ENCODE measurements at regions of chr3 and their contacts with region 1.

Region 1: DNA sequence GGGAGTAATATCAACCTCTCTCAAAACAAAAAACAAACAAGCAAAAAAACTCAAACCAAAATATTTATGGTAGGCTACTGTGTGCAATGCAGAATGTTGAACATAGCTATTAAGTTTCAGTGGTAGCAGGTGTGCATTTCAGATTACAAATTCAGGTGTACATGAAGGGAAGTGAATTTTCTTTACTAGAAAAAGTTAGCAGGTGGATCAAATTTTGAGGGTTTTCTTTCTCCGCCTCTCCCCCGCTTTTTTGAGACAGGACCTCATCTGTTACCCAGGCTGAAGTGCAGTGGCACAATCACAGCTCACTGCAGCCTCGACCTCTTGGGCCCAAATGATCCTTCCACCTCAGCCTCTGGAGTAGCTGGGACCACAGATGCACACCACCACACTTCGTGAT is 109.7 kb upstream of the GOLIM4 start:
- DNase-seq: peak; percentile 50
- H3K4me3 ChIP-seq: peak overlapping the region; percentile 68
- H3K27ac ChIP-seq: peak overlapping the region; percentile 98
- H3K4me1 ChIP-seq: peaks cover 43% of the 10 kb centered on the region
- CTCF ChIP-seq: no peak

Region 2: DNA sequence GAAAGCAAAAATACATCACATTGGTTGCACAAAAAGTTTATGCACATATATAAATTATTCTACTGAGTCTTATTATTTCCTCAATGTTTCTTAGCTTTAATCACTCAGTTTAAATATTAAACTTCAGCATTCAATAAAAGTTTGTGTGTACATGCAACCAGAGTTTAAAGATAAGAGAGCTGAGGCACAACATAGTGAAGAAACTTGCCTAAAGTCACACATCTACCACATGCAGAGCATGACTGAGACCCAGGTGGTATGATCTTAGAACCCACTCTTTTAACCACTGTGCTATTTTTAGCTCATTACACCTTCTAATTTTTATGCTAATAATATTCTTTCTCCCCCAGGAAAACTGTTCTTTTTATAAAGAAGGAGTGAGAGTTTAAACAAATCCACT is 13.6 kb before region 1 on chr3:
- CTCF ChIA-PET with region 1: no interaction called
- POLR2A ChIA-PET with region 1: interaction called, 12 read pairs
- intact Hi-C with region 1: no loop called
- DNase-seq: no peak
- H3K4me3 ChIP-seq: no peak overlapping the region
- H3K27ac ChIP-seq: no peak overlapping the region
- H3K4me1 ChIP-seq: peaks cover 3% of the 10 kb centered on the region
- CTCF ChIP-seq: no peak

Region 3: DNA sequence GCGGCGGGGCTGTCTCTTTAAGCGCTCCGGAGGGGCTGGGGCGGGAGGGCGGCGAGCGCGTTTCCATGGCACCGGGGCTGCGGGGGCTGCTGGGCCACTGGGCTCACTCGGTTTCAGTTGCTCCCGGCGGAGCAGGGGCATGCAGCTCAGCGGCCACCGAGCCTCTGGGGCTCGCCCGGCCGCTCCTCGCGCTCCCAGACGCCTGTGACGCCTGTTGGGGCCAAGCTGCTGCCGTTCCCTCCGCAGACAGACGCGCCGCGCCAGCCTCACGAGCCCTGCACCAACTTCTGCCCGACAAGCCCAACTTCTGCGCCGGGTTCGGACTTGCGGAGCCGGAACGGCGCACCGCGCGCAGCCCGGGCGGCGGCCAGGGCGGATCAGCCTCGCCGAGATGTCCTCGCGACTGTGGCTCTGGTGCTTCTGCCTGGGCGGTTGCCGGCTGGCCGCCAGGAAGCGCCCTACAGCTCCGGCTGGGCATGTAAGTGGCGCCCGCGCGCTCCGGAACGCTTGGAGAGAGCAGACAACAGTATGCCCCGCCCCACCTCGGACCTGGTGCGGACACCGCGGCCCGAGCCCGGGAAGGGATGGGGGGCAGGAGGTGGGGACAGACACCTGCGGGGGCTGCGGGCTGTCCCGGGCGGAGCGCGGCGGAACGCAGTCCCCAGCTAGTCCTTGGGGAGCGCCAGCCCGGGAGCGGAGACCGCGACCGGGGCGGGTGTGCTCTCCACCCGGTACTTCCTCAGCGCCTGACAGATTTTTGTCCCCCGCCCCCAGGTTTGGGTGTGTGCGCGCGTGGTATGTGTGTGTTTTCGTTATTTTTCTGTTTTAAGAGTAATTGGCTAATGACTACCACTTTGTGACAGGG is 44.3 kb after region 1 on chr3:
- CTCF ChIA-PET with region 1: no interaction called
- POLR2A ChIA-PET with region 1: no interaction called
- intact Hi-C with region 1: no loop called
- DNase-seq: peak; percentile 47
- H3K4me3 ChIP-seq: peak overlapping the region; percentile 69
- H3K27ac ChIP-seq: no peak overlapping the region
- H3K4me1 ChIP-seq: peaks cover 12% of the 10 kb centered on the region
- CTCF ChIP-seq: 0 out of 2 replicates have a peak, but pooled peaks have one; percentile 18

Measured in OCI-LY7 (cell line).